PC-3 (cell line): ENCODE measurements at regions of chr12 and their contacts with region 1.

Region 1: DNA sequence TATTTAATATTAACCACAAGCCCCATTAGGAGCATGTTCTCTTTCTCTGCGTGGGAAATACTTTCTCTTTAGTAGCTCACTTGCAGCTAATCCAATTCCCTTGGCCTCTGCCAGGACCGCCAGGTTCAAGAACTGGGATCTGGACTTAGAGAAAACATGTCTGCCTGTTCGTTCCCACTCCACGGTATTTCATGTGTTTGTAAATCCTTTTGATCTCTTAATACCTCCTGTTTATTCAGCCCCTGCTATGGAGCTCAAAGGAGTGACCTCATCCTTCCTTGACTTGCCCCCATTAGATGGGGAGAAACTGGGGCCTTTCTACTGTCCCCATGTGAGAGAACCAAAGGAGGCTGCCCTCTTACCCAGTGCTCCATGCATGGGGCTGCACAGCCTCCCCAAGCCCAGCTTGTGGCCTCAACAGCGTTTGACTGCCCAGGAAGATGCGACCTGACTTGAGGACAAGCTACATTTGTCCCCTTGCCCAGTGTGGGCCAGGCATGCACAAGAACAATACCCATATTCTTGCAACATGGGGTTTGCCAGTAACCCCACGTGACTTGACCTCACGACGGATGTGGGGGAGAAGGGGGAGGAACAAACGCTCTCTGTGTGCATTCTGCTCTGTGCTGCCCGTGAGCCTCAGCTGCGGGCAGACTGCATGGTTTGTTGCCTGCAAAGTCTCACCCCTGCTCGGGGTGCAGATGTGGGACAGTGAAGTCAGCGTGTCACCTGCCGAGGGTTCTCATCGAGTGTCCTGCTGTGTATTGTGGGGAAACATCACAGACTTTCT is 30.3 kb downstream of the CD9 start:
- DNase-seq: peak; percentile 47
- ATAC-seq: no peak; the same call in 1 of the 2 replicates
- H3K4me3 ChIP-seq: peak overlapping the region; percentile 52; the same call in 1 of the 2 replicates
- H3K27ac ChIP-seq: peak overlapping the region; percentile 99
- H3K4me1 ChIP-seq: peaks cover 65% of the 10 kb centered on the region
- H3K27me3 ChIP-seq: no peaks in the 10 kb centered on the region
- CTCF ChIP-seq: no peak

Region 2: DNA sequence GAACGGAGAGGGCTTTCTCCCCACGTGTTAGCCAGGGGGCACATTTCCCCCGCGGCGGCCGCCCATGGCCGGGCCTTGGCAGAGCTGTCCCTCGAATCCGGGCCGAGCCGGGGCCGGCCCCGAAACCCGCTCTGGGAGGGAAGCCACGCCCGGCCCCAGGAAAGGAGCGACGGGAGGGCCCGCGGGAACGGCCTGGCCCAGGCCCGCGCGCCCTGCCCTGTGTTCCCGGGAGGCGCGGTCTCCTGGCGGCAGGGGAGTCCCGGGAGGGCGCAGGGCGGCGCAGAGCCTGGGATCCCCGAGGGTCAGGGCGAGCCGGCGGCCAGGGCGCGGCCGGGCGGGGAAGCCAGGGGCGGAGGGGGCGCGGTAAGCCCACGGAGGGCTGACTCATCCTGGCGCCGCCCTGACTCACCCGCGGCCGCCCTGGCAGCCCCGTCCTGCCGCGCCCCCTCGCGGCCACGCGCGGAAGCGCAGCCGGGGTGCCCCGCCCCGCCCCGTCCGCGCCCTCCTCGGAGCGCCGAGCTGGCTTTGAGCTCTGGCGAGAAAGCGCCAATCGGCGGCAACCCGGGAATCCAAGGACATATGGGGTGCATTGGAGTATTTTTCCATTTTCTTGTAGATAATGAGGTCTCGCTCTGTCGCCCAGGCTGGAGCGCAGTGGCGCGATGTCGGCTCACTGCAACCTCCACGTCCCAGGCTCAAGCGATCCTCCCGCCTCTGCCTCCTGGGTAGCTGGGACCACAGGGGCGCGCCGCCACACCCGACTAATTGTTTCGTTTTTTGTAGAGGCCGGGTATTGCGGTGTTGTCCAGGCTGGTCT is 48.1 kb after region 1 on chr12:
- CTCF ChIA-PET with region 1: interaction called, 15 read pairs
- POLR2A ChIA-PET with region 1: interaction called, 7 read pairs
- intact Hi-C with region 1: loop called (anchors 1 kb)
- DNase-seq: peak; percentile 88
- ATAC-seq: peak; percentile 67
- H3K4me3 ChIP-seq: peak overlapping the region; percentile 69
- H3K27ac ChIP-seq: peak overlapping the region; percentile 100
- H3K4me1 ChIP-seq: peaks cover 61% of the 10 kb centered on the region
- H3K27me3 ChIP-seq: no peaks in the 10 kb centered on the region
- CTCF ChIP-seq: peak; percentile 53; the same call in 1 of the 2 replicates